CD4-positive, alpha-beta T cell (primary cell): ENCODE measurements at regions of chr9 and their contacts with region 1.

Region 1: DNA sequence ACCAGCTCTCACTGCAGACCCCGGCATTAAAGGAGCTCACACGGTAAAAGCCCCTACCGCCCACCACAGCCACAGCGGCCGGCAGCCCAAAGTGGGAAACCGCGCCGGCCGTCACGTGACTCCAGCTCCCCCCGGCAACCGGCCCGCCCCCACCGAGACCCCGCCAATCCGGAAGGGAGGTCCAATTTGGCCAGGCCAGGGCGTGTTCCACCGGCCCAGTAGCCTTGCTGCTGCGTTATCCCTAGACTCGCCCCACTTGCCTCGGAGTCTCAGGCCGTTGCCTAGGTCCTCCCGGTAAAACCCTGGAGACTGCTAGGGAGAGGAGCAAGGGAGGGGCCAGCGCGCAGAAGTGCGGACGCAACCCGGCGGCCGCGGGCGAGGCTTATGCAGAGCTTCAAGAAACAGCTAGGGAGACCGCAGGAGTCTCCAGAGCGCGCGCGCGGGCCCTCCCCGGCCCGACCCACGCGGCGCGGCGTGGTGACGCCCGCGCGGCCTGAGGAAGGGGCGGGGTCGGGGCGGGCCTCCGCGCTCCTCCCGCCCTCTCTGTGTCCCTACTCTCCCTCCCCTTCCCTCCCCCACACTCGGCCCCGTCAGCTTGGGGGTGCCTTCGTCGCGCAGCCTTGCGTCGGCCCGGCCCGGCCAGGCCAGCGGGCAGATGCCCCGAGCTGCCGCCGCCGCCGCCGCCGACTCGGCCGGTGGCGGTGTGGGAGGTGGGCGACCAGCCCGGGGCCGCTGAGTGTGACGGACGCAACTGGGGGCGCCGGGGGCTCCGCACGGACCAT is at the start of gene RIC1:
- DNase-seq: peak; percentile 74 to 96 (median 86)
- ATAC-seq: peak; percentile 79
- H3K4me3 ChIP-seq: peak within 1 kb of the TSS; percentile 88
- H3K4me3 Mint-ChIP-seq: peak within 1 kb of the TSS; percentile 99
- H3K27ac ChIP-seq: peak within 1 kb of the TSS; percentile 85
- H3K27ac Mint-ChIP-seq: peak within 1 kb of the TSS; percentile 97
- H3K4me1 ChIP-seq: peaks cover 42% of the 10 kb centered on the region
- H3K4me1 Mint-ChIP-seq: peaks cover 66% of the 10 kb centered on the region
- H3K27me3 ChIP-seq: no peaks in the 10 kb centered on the region
- H3K27me3 Mint-ChIP-seq: no peaks in the 10 kb centered on the region
- CTCF ChIP-seq: no peak
- total RNA-seq, gene RIC1: 24.7 to 26.3 TPM

Region 2: GRCh38 chr9:4596165-4596922 is 1032.4 kb before region 1 on chr9:
- CTCF ChIA-PET with region 1: no interaction called
- POLR2A ChIA-PET with region 1: interaction called, 3 read pairs
- intact Hi-C with region 1: loop called in 1 of 2 experiments (anchors 10 kb)
- DNase-seq: peak; percentile 30 to 86 (median 55)
- ATAC-seq: peak; percentile 91
- H3K4me3 ChIP-seq: no peak overlapping the region
- H3K4me3 Mint-ChIP-seq: peak overlapping the region; percentile 62
- H3K27ac ChIP-seq: peak overlapping the region; percentile 25 to 73
- H3K27ac Mint-ChIP-seq: peak overlapping the region; percentile 94
- H3K4me1 ChIP-seq: peaks cover 39% of the 10 kb centered on the region
- H3K4me1 Mint-ChIP-seq: peaks cover 72% of the 10 kb centered on the region
- H3K27me3 ChIP-seq: no peaks in the 10 kb centered on the region
- H3K27me3 Mint-ChIP-seq: no peaks in the 10 kb centered on the region
- CTCF ChIP-seq: peak; percentile 50

Region 3: DNA sequence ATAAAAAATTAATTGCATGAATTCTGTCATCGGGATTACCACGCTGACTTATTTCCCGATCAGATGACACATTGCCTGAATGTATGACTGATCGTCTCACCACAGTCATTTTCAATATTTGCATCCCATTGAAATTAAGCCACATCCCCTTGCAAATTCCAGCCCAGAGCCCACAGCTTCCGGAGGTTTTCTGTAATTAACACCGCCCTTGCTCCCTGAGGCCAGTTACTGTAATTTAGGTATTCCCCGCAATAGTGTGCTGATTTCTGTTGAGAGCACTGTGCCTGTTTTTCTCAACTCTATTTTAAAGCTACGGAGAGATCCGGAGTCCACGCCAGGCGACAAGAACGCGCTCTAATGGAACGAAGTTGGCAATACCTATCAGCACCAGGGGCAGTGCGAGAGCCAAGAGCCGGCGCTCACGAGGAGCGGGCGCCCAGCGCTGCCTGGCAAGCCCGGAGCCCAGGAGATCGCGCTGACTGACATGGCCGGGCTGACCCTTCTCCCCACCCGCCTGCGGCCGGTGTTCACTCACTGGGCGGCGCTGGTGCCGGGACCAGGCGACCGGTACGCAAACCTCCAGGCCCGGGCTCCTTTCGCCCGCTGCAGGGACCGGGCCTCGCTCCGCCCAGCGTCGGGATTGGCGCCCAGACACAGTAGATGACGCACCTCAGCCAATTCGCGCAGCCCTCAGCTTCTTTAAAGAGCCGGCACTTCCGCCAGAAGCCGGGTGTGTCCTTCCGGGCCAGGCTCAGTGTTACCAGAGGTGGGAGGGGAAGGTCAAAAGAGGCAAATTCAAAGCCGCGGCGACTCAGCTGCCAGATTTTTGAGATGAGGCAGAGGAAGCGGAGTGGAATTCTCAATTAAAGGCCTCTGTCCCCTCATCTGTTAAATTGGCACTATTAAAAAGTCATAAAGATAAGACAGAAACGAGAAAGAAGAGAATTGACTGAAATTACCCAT is 191.2 kb before region 1 on chr9 and contains the start of gene PLGRKT:
- CTCF ChIA-PET with region 1: no interaction called
- POLR2A ChIA-PET with region 1: interaction called, 39 read pairs
- intact Hi-C with region 1: loop called in 1 of 2 experiments (anchors 5 kb)
- DNase-seq: peak; percentile 80 to 96 (median 86)
- ATAC-seq: peak; percentile 91
- H3K4me3 ChIP-seq: peak within 1 kb of the TSS; percentile 81
- H3K4me3 Mint-ChIP-seq: peak within 1 kb of the TSS; percentile 94
- H3K27ac ChIP-seq: peak within 1 kb of the TSS; percentile 89 to 93
- H3K27ac Mint-ChIP-seq: peak within 1 kb of the TSS; percentile 97
- H3K4me1 ChIP-seq: peaks cover 29% of the 10 kb centered on the region
- H3K4me1 Mint-ChIP-seq: peaks cover 46% of the 10 kb centered on the region
- H3K27me3 ChIP-seq: no peaks in the 10 kb centered on the region
- H3K27me3 Mint-ChIP-seq: no peaks in the 10 kb centered on the region
- CTCF ChIP-seq: peak; percentile 18
- total RNA-seq, gene PLGRKT: 13.8 to 15.6 TPM

Region 4: GRCh38 chr9:5582835-5583195 is 45.9 kb before region 1 on chr9:
- CTCF ChIA-PET with region 1: no interaction called
- POLR2A ChIA-PET with region 1: interaction called, 30 read pairs
- intact Hi-C with region 1: no loop called
- DNase-seq: peak in 12 of 14 experiments; percentile 10 to 81 (median 30)
- ATAC-seq: peak; percentile 92
- H3K4me3 ChIP-seq: no peak overlapping the region
- H3K4me3 Mint-ChIP-seq: peak overlapping the region; percentile 1
- H3K27ac ChIP-seq: peak overlapping the region in 1 of 2 donors; percentile 16
- H3K27ac Mint-ChIP-seq: peak overlapping the region; percentile 81
- H3K4me1 ChIP-seq: peaks cover 32% of the 10 kb centered on the region
- H3K4me1 Mint-ChIP-seq: peaks cover 70% of the 10 kb centered on the region
- H3K27me3 ChIP-seq: no peaks in the 10 kb centered on the region
- H3K27me3 Mint-ChIP-seq: no peaks in the 10 kb centered on the region
- CTCF ChIP-seq: no peak

Region 5: DNA sequence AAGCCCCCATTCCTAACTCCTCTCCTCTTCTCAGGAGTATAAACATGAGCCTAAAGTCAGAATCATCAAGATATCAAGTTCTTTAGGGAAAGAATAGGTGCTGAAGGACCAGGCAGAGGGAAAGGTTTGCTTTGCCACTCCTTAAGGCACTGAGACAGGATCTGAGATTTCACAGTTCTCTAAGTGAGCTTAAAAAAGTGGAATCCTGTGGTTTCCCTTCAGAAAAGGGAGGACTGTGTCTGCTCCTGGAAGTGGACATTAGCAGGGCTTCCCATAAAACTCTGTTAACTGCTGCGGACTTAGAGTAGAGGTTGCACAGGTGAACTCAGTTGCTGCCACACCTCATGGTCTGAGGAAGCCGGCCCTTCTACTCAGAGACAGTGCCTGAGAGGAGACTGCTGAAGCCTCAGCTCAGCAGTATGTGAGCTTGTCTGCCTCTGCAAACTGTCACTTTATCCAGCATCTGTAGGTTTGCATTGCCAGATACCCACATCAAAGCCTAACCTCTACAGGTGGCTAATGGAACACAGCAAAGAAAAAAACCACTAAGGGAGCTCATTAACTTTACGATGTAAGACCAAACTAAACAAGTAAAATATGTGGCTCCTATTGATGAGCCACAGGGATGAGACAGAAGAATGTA is 43.1 kb after region 1 on chr9:
- CTCF ChIA-PET with region 1: interaction called, 3 read pairs
- POLR2A ChIA-PET with region 1: interaction called, 8 read pairs
- intact Hi-C with region 1: loop called (anchors 5 kb)
- DNase-seq: peak in 6 of 14 experiments; percentile 2 to 73 (median 48)
- ATAC-seq: peak; percentile 96
- H3K4me3 ChIP-seq: no peak overlapping the region
- H3K4me3 Mint-ChIP-seq: peak overlapping the region; percentile 26
- H3K27ac ChIP-seq: no peak overlapping the region
- H3K27ac Mint-ChIP-seq: peak overlapping the region; percentile 38
- H3K4me1 ChIP-seq: peaks cover 17% of the 10 kb centered on the region
- H3K4me1 Mint-ChIP-seq: peaks cover 47% of the 10 kb centered on the region
- H3K27me3 ChIP-seq: no peaks in the 10 kb centered on the region
- H3K27me3 Mint-ChIP-seq: no peaks in the 10 kb centered on the region
- CTCF ChIP-seq: no peak

Region 6: GRCh38 chr9:5879419-5880181 is 250.9 kb after region 1 on chr9:
- CTCF ChIA-PET with region 1: no interaction called
- POLR2A ChIA-PET with region 1: no interaction called
- intact Hi-C with region 1: no loop called
- DNase-seq: no peak
- ATAC-seq: no peak
- H3K4me3 ChIP-seq: no peak overlapping the region
- H3K4me3 Mint-ChIP-seq: no peak overlapping the region
- H3K27ac ChIP-seq: no peak overlapping the region
- H3K27ac Mint-ChIP-seq: no peak overlapping the region
- H3K4me1 ChIP-seq: peaks cover 4% of the 10 kb centered on the region
- H3K4me1 Mint-ChIP-seq: no peaks in the 10 kb centered on the region
- H3K27me3 ChIP-seq: no peaks in the 10 kb centered on the region
- H3K27me3 Mint-ChIP-seq: no peaks in the 10 kb centered on the region
- CTCF ChIP-seq: no peak

Region 7: GRCh38 chr9:6015278-6016157 is 386.8 kb after region 1 on chr9 and contains the start of gene RANBP6:
- CTCF ChIA-PET with region 1: no interaction called
- POLR2A ChIA-PET with region 1: interaction called, 4 read pairs
- intact Hi-C with region 1: loop called in 1 of 2 experiments (anchors 5 kb)
- DNase-seq: peak; percentile 82 to 95 (median 89)
- ATAC-seq: peak; percentile 98
- H3K4me3 ChIP-seq: peak within 1 kb of the TSS; percentile 86
- H3K4me3 Mint-ChIP-seq: peak within 1 kb of the TSS; percentile 94
- H3K27ac ChIP-seq: peak within 1 kb of the TSS; percentile 72 to 83
- H3K27ac Mint-ChIP-seq: peak within 1 kb of the TSS; percentile 97
- H3K4me1 ChIP-seq: peaks cover 18% of the 10 kb centered on the region
- H3K4me1 Mint-ChIP-seq: peaks cover 41% of the 10 kb centered on the region
- H3K27me3 ChIP-seq: no peaks in the 10 kb centered on the region
- H3K27me3 Mint-ChIP-seq: no peaks in the 10 kb centered on the region
- CTCF ChIP-seq: no peak
- total RNA-seq, gene RANBP6: 36.7 to 40.6 TPM